ENCODE measurements at regions of chr1 and their contacts with region 1.

Region 1: DNA sequence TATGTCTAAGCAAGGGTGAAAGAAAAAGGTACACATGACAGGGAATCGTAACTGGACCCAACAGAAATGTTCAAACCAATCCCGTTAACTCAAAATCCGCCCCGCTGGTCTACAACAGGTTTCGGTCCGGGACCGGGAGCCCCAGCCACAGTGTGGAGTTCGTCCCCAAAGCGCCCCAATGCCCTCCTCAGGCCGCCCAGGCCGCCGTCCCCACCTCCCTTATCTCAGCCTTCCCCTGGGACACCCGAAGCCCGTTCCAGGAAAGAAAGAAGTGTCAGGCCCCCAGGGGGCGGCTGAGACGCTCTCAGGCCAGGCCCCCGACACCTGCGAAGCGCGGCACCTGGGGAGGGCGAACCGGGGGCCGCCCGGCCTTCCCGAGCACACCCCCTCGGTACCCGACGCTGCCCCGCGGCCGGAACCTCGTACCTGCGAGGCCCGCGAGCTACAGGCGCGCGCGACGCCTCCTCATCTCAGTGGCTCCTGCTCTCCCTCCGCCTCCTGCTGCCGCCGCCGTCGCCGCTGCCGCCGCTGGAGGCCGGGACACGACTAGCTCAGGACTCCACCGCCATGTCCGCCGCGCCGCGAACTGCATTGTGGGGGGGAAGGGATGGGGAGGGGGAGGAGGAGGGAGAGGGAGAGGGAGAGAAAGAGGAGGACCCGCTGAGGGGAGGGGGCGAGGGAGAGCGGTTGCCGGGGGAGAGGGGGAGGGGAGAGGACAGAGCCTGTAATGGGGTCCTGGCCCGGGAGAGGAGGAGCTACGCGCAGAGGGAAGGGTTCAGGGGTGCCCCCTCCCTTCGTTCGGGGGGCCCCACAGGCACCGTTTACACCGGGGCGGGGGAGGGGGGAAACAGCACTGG is at the start of gene TUT4:
- DNase-seq: peak; percentile 79
- ATAC-seq: peak; percentile 79
- H3K4me3 ChIP-seq: peak within 1 kb of the TSS; percentile 90 to 94 (median 93)
- H3K27ac ChIP-seq: peak within 1 kb of the TSS; percentile 95
- H3K4me1 ChIP-seq: peaks cover 40% of the 10 kb centered on the region
- H3K27me3 ChIP-seq: no peaks in the 10 kb centered on the region; a peak in 1 of 5 replicates
- CTCF ChIP-seq: peak; percentile 35
- EP300 ChIP-seq: no peak
- POLR2A ChIP-seq: peak in 1 of 2 experiments; percentile 60; a peak in 2 of 4 replicates
- RAD21 ChIP-seq: peak; percentile 31; the same call in 1 of the 2 replicates
- total RNA-seq, gene TUT4: 44.7 and 47.8 TPM in 2 replicates

Region 2: GRCh38 chr1:52520148-52520547 is 32.6 kb before region 1 on chr1:
- CTCF ChIA-PET with region 1: no interaction called
- POLR2A ChIA-PET with region 1: no interaction called
- in situ Hi-C with region 1: no loop called
- intact Hi-C with region 1: no loop called
- DNase-seq: no peak
- ATAC-seq: no peak
- H3K4me3 ChIP-seq: no peak overlapping the region
- H3K27ac ChIP-seq: no peak overlapping the region
- H3K4me1 ChIP-seq: no peaks in the 10 kb centered on the region
- H3K27me3 ChIP-seq: no peaks in the 10 kb centered on the region
- CTCF ChIP-seq: no peak
- EP300 ChIP-seq: no peak
- POLR2A ChIP-seq: no peak
- RAD21 ChIP-seq: no peak

Region 3: GRCh38 chr1:52665006-52665941 is 112.5 kb after region 1 on chr1:
- CTCF ChIA-PET with region 1: no interaction called
- POLR2A ChIA-PET with region 1: interaction called, 3 read pairs
- in situ Hi-C with region 1: no loop called
- intact Hi-C with region 1: loop called (anchors 5 kb)
- DNase-seq: no peak
- ATAC-seq: peak; percentile 15; the same call in 2 of the 3 replicates
- H3K4me3 ChIP-seq: no peak overlapping the region
- H3K27ac ChIP-seq: no peak overlapping the region
- H3K4me1 ChIP-seq: peaks cover 36% of the 10 kb centered on the region
- H3K27me3 ChIP-seq: peaks cover 0 to 3% of the 10 kb centered on the region in 2 experiments; a peak in 2 of 5 replicates
- CTCF ChIP-seq: no peak
- EP300 ChIP-seq: no peak
- POLR2A ChIP-seq: no peak
- RAD21 ChIP-seq: no peak

Region 4: GRCh38 chr1:52683367-52683940 is 130.7 kb after region 1 on chr1:
- CTCF ChIA-PET with region 1: no interaction called
- POLR2A ChIA-PET with region 1: interaction called, 4 read pairs
- in situ Hi-C with region 1: no loop called
- intact Hi-C with region 1: loop called (anchors 2 kb)
- DNase-seq: no peak
- ATAC-seq: no peak
- H3K4me3 ChIP-seq: no peak overlapping the region
- H3K27ac ChIP-seq: no peak overlapping the region
- H3K4me1 ChIP-seq: peaks cover 8% of the 10 kb centered on the region; the same call in 1 of the 2 replicates
- H3K27me3 ChIP-seq: no peaks in the 10 kb centered on the region
- CTCF ChIP-seq: no peak
- EP300 ChIP-seq: no peak
- POLR2A ChIP-seq: no peak
- RAD21 ChIP-seq: no peak